ENCODE measurements at regions of chr4 and their contacts with region 1.

Region 1: GRCh38 chr4:42282081-42282901 is 115.0 kb upstream of the SHISA3 start:
- DNase-seq: peak; percentile 80
- CTCF ChIP-seq: peak; percentile 69

Region 2: GRCh38 chr4:41957634-41958033 is 324.7 kb before region 1 on chr4:
- in situ Hi-C with region 1: loop called (anchors 25 kb)
- DNase-seq: peak; percentile 53
- CTCF ChIP-seq: peak; percentile 33

Region 3: GRCh38 chr4:42436928-42437565 is 154.8 kb after region 1 on chr4:
- in situ Hi-C with region 1: no loop called
- DNase-seq: no peak
- CTCF ChIP-seq: no peak

Region 4: GRCh38 chr4:42490015-42490414 is 207.7 kb after region 1 on chr4:
- in situ Hi-C with region 1: no loop called
- DNase-seq: no peak
- CTCF ChIP-seq: no peak

Region 5: GRCh38 chr4:42519803-42520417 is 237.6 kb after region 1 on chr4:
- in situ Hi-C with region 1: loop called (anchors 5 kb)
- DNase-seq: peak; percentile 20
- CTCF ChIP-seq: peak; percentile 39